Adrenal gland (tissue), 19 donors: ENCODE measurements at regions of chr15 and their contacts with region 1.

Region 1: GRCh38 chr15:23866832-23867231 is 179.7 kb upstream of the NDN start:
- DNase-seq: peak in 1 of 7 donors; percentile 11
- H3K4me3 ChIP-seq: no peak overlapping the region
- H3K27ac ChIP-seq: no peak overlapping the region
- H3K4me1 ChIP-seq: no peaks in the 10 kb centered on the region
- H3K27me3 ChIP-seq: peaks cover 15% of the 10 kb centered on the region
- CTCF ChIP-seq: peak in 3 of 6 experiments; percentile 24 to 35 (median 26)
- POLR2A ChIP-seq: no peak

Region 2: DNA sequence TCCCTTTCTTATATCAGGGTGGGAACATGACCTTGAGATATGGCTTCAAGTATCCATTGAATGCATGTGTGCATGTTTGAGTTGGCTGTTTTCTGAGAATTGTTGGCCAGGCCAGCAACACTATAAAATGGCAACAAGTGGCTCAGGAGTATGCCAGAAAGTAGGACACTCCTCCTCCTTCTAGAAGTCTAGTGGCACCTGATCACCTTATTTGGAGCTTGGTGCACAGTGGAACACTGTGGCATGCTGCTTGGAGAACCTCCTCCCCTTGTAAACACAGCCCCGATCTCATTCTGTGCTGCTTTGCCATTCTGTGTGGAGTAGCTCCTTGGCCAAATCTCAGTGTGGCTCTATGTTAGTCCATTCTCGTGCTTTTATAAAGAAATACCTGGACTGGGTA is 65.0 kb before region 1 on chr15:
- intact Hi-C with region 1: loop called in 1 of 2 experiments (anchors 10 kb)
- DNase-seq: no peak
- H3K4me3 ChIP-seq: no peak overlapping the region
- H3K27ac ChIP-seq: no peak overlapping the region
- H3K4me1 ChIP-seq: no peaks in the 10 kb centered on the region
- H3K27me3 ChIP-seq: no peaks in the 10 kb centered on the region
- CTCF ChIP-seq: no peak
- POLR2A ChIP-seq: no peak